CD4-positive, alpha-beta memory T cell (primary cell): ENCODE measurements at regions of chr6 and their contacts with region 1.

Region 1: GRCh38 chr6:36912586-36912985 is 26.8 kb downstream of the C6orf89 start:
- DNase-seq: peak; percentile 76 to 90 (median 82)
- H3K4me3 ChIP-seq: peak overlapping the region; percentile 8 to 22
- H3K4me3 Mint-ChIP-seq: peak overlapping the region; percentile 63 to 85 (median 78)
- H3K27ac ChIP-seq: peak overlapping the region; percentile 58
- H3K27ac Mint-ChIP-seq: peak overlapping the region; percentile 87 to 97 (median 94)
- H3K4me1 ChIP-seq: peaks cover 42% of the 10 kb centered on the region
- H3K4me1 Mint-ChIP-seq: peaks cover 26 to 49% (median 34%) of the 10 kb centered on the region in 4 donors
- H3K27me3 ChIP-seq: no peaks in the 10 kb centered on the region
- H3K27me3 Mint-ChIP-seq: no peaks in the 10 kb centered on the region

Region 2: GRCh38 chr6:36962874-36963273 is 50.3 kb after region 1 on chr6:
- CTCF ChIA-PET with region 1: no interaction called
- POLR2A ChIA-PET with region 1: interaction called, 5 read pairs
- intact Hi-C with region 1: loop called (anchors 5 kb)
- DNase-seq: peak; percentile 83 to 90 (median 85)
- H3K4me3 ChIP-seq: no peak overlapping the region
- H3K4me3 Mint-ChIP-seq: peak overlapping the region; percentile 49 to 87 (median 71)
- H3K27ac ChIP-seq: peak overlapping the region; percentile 55
- H3K27ac Mint-ChIP-seq: peak overlapping the region; percentile 90 to 98 (median 94)
- H3K4me1 ChIP-seq: peaks cover 55% of the 10 kb centered on the region
- H3K4me1 Mint-ChIP-seq: peaks cover 33 to 64% (median 50%) of the 10 kb centered on the region in 4 donors
- H3K27me3 ChIP-seq: no peaks in the 10 kb centered on the region
- H3K27me3 Mint-ChIP-seq: no peaks in the 10 kb centered on the region